ENCODE measurements at regions of chr6 and their contacts with region 1.

Region 1: GRCh38 chr6:14953836-14954235 is 292.0 kb upstream of the JARID2 start:
- DNase-seq: no peak
- H3K4me3 ChIP-seq: no peak overlapping the region
- H3K27ac ChIP-seq: no peak overlapping the region
- H3K4me1 ChIP-seq: no peaks in the 10 kb centered on the region
- H3K27me3 ChIP-seq: no peaks in the 10 kb centered on the region
- CTCF ChIP-seq: no peak
- POLR2A ChIP-seq: no peak

Region 2: DNA sequence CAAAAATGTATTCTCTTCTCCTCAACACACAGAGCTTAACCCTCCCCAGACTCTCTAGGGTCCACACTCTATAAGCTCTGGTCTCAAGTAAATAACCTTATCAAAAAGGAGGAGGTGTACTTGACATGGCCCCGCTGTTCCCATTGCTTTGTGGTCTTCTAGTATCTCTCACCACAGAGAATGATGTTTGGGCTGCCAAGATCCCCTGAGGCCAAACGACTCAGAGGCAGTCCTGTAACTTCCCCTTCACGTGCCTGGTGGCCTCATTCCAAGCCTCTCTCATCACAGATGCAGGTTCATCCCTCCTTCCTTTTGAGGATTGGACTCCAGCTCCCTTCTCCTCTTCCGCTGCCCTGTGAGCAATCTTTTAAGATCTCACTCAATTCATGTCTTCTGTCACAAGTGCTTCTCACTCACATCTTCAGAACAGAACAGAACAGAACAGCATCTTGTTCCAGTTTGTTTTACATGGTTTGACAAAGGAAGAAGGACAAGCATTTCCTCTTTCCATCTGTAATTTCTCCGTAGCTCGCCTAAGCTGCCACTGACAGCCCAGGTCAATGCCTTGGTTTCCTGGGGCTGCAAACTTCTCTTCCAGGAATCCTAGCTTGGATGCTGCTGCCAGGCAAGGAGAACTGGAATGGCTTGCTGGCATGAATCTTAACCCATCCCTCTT is 294.8 kb before region 1 on chr6:
- intact Hi-C with region 1: no loop called
- DNase-seq: peak in 1 of 2 donors; percentile 26
- H3K4me3 ChIP-seq: no peak overlapping the region
- H3K27ac ChIP-seq: no peak overlapping the region
- H3K4me1 ChIP-seq: no peaks in the 10 kb centered on the region
- H3K27me3 ChIP-seq: no peaks in the 10 kb centered on the region
- CTCF ChIP-seq: no peak
- POLR2A ChIP-seq: no peak

Region 3: DNA sequence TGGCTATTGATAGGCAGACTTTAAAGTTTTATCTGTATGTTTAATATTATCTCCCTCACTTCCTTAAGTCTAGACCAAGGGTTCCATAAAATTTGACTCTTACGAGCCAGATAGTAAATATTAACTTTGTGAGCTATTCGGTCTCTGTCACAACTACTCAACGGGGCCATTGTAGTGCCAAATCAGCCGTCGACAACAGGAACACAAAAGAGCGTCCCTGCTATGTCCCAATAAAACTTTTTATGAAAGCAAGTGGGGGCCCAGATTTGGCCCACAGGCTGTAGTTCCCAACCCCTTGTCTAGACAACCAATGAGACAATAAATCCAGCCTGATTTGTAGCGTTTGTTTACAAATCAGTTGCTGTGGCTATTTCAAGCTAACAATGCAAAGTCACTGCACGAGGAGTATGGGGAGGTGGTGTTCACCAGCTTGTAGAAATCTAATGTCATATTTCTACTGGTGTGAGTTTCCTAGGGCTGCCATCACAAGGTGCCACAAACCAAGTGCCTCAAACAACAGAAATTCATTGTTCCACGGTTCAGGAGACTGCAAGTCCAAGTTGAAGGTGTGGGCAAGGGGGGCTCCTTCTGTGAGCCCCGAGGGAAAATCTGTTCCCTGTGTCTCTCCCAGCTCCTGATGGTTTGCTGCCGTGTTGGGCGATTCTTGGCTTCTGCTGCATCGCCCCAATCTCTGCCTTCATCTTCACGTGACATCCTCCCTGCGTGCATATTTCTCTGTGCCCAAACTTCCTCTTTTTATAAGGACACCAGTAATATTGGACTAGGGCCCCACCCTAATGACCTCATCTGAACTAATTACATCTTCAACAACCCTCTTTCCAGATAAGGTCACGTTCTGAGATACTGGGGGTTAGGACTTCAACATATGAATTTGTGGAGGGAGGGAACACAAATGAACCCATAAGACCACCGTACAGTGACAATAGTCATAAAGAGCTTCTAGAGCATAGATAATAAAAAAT is 63.9 kb before region 1 on chr6:
- intact Hi-C with region 1: loop called (anchors 2 kb)
- DNase-seq: no peak
- H3K4me3 ChIP-seq: no peak overlapping the region
- H3K27ac ChIP-seq: no peak overlapping the region
- H3K4me1 ChIP-seq: no peaks in the 10 kb centered on the region
- H3K27me3 ChIP-seq: no peaks in the 10 kb centered on the region
- CTCF ChIP-seq: no peak
- POLR2A ChIP-seq: no peak